ENCODE measurements at regions of chr4 and their contacts with region 1.

Region 1: DNA sequence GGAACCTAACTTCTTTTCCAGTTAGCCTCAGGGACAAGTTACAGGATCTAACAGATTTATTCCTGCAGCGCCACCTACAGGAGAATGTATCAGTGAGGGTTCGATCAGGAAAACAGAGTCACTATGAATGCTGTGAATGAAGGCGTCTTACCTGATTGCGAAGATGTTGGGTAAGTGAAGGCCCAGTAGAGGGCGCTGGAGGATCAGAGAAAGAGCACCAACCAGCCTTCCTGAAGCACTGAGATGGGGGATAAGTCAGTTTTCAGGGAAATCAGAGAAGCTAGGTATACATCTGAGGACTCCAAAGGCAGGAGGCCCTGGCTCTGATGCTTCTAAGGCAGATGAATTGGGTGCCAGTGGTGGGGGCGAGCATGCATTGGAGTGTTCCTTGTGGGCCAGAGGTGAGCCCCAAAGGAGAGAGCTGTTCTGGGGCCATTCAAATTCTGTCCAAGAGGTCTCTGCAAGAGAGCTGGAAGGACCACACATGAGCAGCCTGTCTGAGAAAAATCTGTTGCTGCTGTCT is 169.9 kb upstream of the AADAT start:
- DNase-seq: peak; percentile 93
- ATAC-seq: peak; percentile 99
- H3K4me3 Mint-ChIP-seq: no peak overlapping the region
- H3K27ac Mint-ChIP-seq: no peak overlapping the region
- H3K4me1 Mint-ChIP-seq: peaks cover 12% of the 10 kb centered on the region
- H3K27me3 Mint-ChIP-seq: no peaks in the 10 kb centered on the region
- CTCF ChIP-seq: peak; percentile 94

Region 2: GRCh38 chr4:170138580-170139194 is 121.0 kb before region 1 on chr4:
- CTCF ChIA-PET with region 1: interaction called, 16 read pairs
- POLR2A ChIA-PET with region 1: no interaction called
- DNase-seq: peak; percentile 85
- ATAC-seq: peak; percentile 98
- H3K4me3 Mint-ChIP-seq: no peak overlapping the region
- H3K27ac Mint-ChIP-seq: no peak overlapping the region
- H3K4me1 Mint-ChIP-seq: no peaks in the 10 kb centered on the region
- H3K27me3 Mint-ChIP-seq: no peaks in the 10 kb centered on the region
- CTCF ChIP-seq: peak; percentile 65

Region 3: GRCh38 chr4:170198747-170199146 is 60.9 kb before region 1 on chr4:
- CTCF ChIA-PET with region 1: interaction called, 15 read pairs
- POLR2A ChIA-PET with region 1: no interaction called
- DNase-seq: no peak
- ATAC-seq: no peak
- H3K4me3 Mint-ChIP-seq: no peak overlapping the region
- H3K27ac Mint-ChIP-seq: no peak overlapping the region
- H3K4me1 Mint-ChIP-seq: peaks cover 4% of the 10 kb centered on the region
- H3K27me3 Mint-ChIP-seq: no peaks in the 10 kb centered on the region
- CTCF ChIP-seq: no peak

Region 4: DNA sequence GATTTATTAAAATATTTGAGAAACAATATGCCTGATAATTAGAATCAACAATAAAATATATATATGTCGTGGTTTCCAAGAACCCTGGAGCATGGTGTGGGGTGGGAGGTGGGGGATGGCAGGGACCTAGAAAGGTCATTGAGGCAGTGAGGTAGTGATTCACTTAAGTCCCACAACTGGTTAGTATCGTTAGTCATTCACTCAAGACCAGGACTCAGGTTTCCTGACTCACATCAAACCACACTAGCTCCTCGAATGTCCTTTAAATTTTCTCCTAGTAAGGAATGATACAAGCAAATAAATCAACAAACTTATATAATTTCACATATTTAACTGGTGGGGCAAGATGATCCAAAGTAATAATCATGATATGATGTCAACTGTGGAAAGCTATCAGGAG is 11.1 kb before region 1 on chr4:
- CTCF ChIA-PET with region 1: interaction called, 21 read pairs
- POLR2A ChIA-PET with region 1: no interaction called
- DNase-seq: no peak
- ATAC-seq: no peak
- H3K4me3 Mint-ChIP-seq: no peak overlapping the region
- H3K27ac Mint-ChIP-seq: no peak overlapping the region
- H3K4me1 Mint-ChIP-seq: peaks cover 4% of the 10 kb centered on the region
- H3K27me3 Mint-ChIP-seq: no peaks in the 10 kb centered on the region
- CTCF ChIP-seq: no peak

Region 5: GRCh38 chr4:170281027-170281426 is 21.3 kb after region 1 on chr4:
- CTCF ChIA-PET with region 1: interaction called, 12 read pairs
- POLR2A ChIA-PET with region 1: no interaction called
- DNase-seq: no peak
- ATAC-seq: no peak
- H3K4me3 Mint-ChIP-seq: no peak overlapping the region
- H3K27ac Mint-ChIP-seq: no peak overlapping the region
- H3K4me1 Mint-ChIP-seq: no peaks in the 10 kb centered on the region
- H3K27me3 Mint-ChIP-seq: peaks cover 4% of the 10 kb centered on the region
- CTCF ChIP-seq: no peak

Region 6: GRCh38 chr4:170687751-170688150 is 428.1 kb after region 1 on chr4:
- CTCF ChIA-PET with region 1: no interaction called
- POLR2A ChIA-PET with region 1: no interaction called
- DNase-seq: peak; percentile 28
- ATAC-seq: peak; percentile 70
- H3K4me3 Mint-ChIP-seq: no peak overlapping the region
- H3K27ac Mint-ChIP-seq: no peak overlapping the region
- H3K4me1 Mint-ChIP-seq: peaks cover 22% of the 10 kb centered on the region
- H3K27me3 Mint-ChIP-seq: no peaks in the 10 kb centered on the region
- CTCF ChIP-seq: no peak

Region 7: GRCh38 chr4:170716868-170717267 is 457.2 kb after region 1 on chr4:
- CTCF ChIA-PET with region 1: interaction called, 12 read pairs
- POLR2A ChIA-PET with region 1: no interaction called
- DNase-seq: no peak
- ATAC-seq: no peak
- H3K4me3 Mint-ChIP-seq: no peak overlapping the region
- H3K27ac Mint-ChIP-seq: no peak overlapping the region
- H3K4me1 Mint-ChIP-seq: 0 out of 2 replicates have a peak, but pooled peaks cover 6% of the 10 kb centered on the region
- H3K27me3 Mint-ChIP-seq: no peaks in the 10 kb centered on the region
- CTCF ChIP-seq: no peak

Region 8: DNA sequence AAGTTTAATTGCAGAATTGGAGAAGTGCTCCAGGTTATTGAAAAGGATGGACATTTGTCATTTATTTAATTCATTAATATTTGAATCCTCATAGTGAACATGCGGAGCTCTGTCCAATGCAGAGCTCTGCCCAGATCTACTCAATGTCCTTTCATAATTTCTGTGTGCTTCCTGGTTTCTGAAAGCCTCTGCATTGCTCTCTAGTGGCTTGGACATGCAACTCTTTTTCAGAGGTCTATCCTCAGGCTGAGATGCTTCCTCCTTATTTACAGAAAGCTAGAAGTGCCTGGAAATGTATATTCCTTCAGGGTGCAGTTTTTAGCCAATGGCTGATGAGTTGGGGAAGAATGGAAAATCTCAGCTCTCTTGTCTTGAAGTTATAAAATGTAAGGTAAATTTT is 616.2 kb after region 1 on chr4:
- CTCF ChIA-PET with region 1: interaction called, 13 read pairs
- POLR2A ChIA-PET with region 1: no interaction called
- DNase-seq: no peak
- ATAC-seq: peak; percentile 90
- H3K4me3 Mint-ChIP-seq: no peak overlapping the region
- H3K27ac Mint-ChIP-seq: no peak overlapping the region
- H3K4me1 Mint-ChIP-seq: no peaks in the 10 kb centered on the region
- H3K27me3 Mint-ChIP-seq: no peaks in the 10 kb centered on the region
- CTCF ChIP-seq: no peak